ENCODE measurements at regions of chr11 and their contacts with region 1.

Region 1: DNA sequence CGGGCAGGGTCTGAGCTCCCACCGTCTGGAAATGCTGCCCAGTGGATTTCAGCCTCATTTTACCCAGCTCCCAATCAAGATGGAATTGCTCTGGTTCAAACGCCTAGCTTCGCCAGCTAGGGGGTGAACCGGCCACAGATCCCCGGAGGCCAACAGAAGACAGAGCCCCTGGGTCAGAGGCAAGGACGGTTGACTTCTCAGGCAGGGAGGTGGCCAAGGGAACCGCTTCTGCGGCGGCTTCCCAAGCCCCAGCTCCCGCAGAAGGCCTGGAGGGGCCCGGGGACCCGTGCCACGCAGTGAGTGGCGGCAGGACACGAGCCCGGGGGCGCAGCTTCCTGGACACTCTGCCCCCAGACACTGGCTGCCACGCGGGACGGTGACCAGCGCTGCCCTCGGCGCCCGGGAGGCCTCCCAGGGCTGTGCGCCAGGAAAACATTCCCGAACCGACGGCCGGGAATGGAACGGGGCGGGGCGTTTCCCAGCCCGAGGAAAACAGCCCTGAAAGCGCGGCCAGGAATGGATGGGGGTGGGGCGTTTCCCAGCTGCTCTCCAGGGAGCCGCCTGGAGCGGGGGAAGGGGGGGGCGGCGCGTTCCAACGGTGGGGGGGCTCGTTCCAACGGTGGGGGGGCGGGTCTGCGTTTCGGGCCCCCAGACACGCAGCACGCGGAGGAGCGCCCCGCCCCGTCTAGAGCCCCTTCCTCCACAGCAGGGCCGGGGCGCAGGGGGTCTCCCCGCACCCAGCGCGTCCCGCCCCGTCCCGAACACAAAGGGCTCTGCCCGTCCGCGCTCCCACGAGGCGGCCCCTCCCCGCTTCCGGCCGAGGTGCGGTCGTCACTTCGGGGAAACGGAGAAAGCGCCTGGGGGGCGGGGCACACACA is 13.5 kb upstream of the B4GALNT4 start:
- DNase-seq: peak; percentile 94 to 95
- H3K4me3 ChIP-seq: peak overlapping the region; percentile 57
- H3K4me3 Mint-ChIP-seq: peak overlapping the region; percentile 52
- H3K27ac Mint-ChIP-seq: peak overlapping the region; percentile 46
- H3K4me1 ChIP-seq: peaks cover 29% of the 10 kb centered on the region
- H3K4me1 Mint-ChIP-seq: peaks cover 20% of the 10 kb centered on the region
- H3K27me3 ChIP-seq: no peaks in the 10 kb centered on the region
- H3K27me3 Mint-ChIP-seq: no peaks in the 10 kb centered on the region
- CTCF ChIP-seq: no peak

Region 2: GRCh38 chr11:250740-251299 is 105.0 kb before region 1 on chr11:
- CTCF ChIA-PET with region 1: interaction called, 15 read pairs
- POLR2A ChIA-PET with region 1: interaction called, 5 read pairs
- intact Hi-C with region 1: no loop called
- DNase-seq: peak; percentile 57 to 73
- H3K4me3 ChIP-seq: no peak overlapping the region
- H3K4me3 Mint-ChIP-seq: no peak overlapping the region
- H3K27ac Mint-ChIP-seq: no peak overlapping the region
- H3K4me1 ChIP-seq: no peaks in the 10 kb centered on the region
- H3K4me1 Mint-ChIP-seq: no peaks in the 10 kb centered on the region
- H3K27me3 ChIP-seq: no peaks in the 10 kb centered on the region
- H3K27me3 Mint-ChIP-seq: no peaks in the 10 kb centered on the region
- CTCF ChIP-seq: peak; percentile 54 to 66

Region 3: GRCh38 chr11:304915-305843 is 50.6 kb before region 1 on chr11:
- CTCF ChIA-PET with region 1: interaction called, 12 read pairs
- POLR2A ChIA-PET with region 1: interaction called, 4 read pairs
- intact Hi-C with region 1: loop called (anchors 5 kb)
- DNase-seq: peak; percentile 71 to 75
- H3K4me3 ChIP-seq: no peak overlapping the region
- H3K4me3 Mint-ChIP-seq: peak overlapping the region; percentile 4
- H3K27ac Mint-ChIP-seq: no peak overlapping the region
- H3K4me1 ChIP-seq: peaks cover 43% of the 10 kb centered on the region
- H3K4me1 Mint-ChIP-seq: peaks cover 30% of the 10 kb centered on the region
- H3K27me3 ChIP-seq: no peaks in the 10 kb centered on the region
- H3K27me3 Mint-ChIP-seq: no peaks in the 10 kb centered on the region
- CTCF ChIP-seq: peak; percentile 56 to 82

Region 4: GRCh38 chr11:680476-680875 is 324.7 kb after region 1 on chr11:
- CTCF ChIA-PET with region 1: no interaction called
- POLR2A ChIA-PET with region 1: no interaction called
- intact Hi-C with region 1: no loop called
- DNase-seq: no peak
- H3K4me3 ChIP-seq: no peak overlapping the region
- H3K4me3 Mint-ChIP-seq: no peak overlapping the region
- H3K27ac Mint-ChIP-seq: peak overlapping the region; percentile 39
- H3K4me1 ChIP-seq: no peaks in the 10 kb centered on the region
- H3K4me1 Mint-ChIP-seq: no peaks in the 10 kb centered on the region
- H3K27me3 ChIP-seq: no peaks in the 10 kb centered on the region
- H3K27me3 Mint-ChIP-seq: no peaks in the 10 kb centered on the region
- CTCF ChIP-seq: no peak